ENCODE measurements at regions of chr11 and their contacts with region 1.

Region 1: DNA sequence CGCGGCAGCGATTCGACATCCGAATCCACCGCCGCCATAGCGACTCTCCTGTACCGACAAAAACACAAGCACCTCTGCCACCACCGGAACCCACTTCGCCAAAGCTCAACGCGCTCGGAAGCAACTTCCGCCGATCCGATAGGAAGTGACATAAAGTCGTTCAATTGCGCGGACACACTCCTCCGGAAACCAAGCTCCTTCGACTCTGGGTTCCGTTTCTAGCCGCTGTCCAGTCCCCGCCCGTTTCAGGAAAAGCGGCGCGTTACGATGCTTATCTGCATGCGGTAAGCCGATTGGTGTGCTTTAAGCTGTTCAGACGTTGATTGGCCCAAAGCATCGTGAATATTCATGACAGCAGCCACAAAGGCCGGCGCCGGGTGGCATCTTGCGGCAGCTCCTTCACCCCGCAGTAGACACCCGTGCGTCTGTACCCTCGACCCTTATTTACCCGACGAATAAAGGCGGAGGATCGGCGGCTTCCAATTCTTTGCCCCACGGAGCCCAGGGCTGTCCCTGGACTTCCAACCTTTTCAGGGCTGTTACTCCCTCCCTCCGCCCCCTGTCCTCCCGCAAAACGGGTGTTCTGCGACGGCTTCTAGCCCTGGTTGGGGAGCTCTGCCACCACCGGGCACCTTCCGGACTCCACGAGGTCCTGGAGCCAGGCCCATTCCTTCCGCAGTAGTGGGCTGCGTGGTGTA is at the start of gene TUT1:
- DNase-seq: peak; percentile 96
- ATAC-seq: peak; percentile 89
- H3K4me3 Mint-ChIP-seq: peak within 1 kb of the TSS; percentile 99
- H3K27ac Mint-ChIP-seq: peak within 1 kb of the TSS; percentile 91
- H3K4me1 Mint-ChIP-seq: peaks cover 19% of the 10 kb centered on the region
- H3K27me3 Mint-ChIP-seq: no peaks in the 10 kb centered on the region; the same call in 1 of the 2 replicates
- CTCF ChIP-seq: no peak
- total RNA-seq, gene TUT1: 35.3 to 40.0 TPM (median 37.3 TPM) in 3 replicates

Region 2: DNA sequence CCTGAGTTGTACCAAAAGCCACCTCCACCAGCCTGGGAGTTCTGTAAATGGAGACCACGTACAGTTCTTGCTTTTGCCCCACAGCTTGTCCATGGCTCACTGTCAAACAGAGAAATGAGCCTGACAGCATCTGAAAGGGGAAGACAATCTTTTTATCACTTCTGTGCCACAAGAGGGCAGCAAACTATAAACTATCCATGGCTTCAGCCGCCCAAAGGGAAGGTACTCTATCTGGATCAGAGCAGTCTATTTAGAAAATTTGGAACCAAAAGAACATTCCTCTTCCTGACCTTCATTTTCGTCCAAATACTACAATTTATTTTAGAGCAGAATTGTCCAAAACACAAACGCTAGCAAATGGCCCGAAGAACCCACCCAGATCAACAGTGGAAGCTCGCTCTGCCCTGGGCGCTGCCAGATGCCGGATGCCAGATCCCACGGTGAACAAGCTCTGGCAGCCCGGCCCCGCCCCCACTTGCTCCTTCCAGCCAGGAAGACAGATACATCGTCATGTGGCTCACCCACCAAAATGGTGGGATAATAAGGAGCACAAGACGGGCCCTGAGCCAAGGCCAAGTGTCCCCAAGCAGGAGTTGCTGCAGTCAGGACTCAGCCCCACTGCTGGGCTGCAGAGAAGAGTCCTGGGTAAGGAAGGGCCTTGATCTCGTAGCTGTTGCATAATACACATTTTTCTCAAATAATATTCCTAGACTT is 196.6 kb before region 1 on chr11:
- CTCF ChIA-PET with region 1: interaction called, 29 read pairs
- POLR2A ChIA-PET with region 1: interaction called, 9 read pairs
- DNase-seq: peak; percentile 78
- ATAC-seq: peak; percentile 71
- H3K4me3 Mint-ChIP-seq: peak overlapping the region; percentile 59
- H3K27ac Mint-ChIP-seq: no peak overlapping the region; the same call in 1 of the 2 replicates
- H3K4me1 Mint-ChIP-seq: peaks cover 22% of the 10 kb centered on the region
- H3K27me3 Mint-ChIP-seq: no peaks in the 10 kb centered on the region
- CTCF ChIP-seq: peak; percentile 61

Region 3: DNA sequence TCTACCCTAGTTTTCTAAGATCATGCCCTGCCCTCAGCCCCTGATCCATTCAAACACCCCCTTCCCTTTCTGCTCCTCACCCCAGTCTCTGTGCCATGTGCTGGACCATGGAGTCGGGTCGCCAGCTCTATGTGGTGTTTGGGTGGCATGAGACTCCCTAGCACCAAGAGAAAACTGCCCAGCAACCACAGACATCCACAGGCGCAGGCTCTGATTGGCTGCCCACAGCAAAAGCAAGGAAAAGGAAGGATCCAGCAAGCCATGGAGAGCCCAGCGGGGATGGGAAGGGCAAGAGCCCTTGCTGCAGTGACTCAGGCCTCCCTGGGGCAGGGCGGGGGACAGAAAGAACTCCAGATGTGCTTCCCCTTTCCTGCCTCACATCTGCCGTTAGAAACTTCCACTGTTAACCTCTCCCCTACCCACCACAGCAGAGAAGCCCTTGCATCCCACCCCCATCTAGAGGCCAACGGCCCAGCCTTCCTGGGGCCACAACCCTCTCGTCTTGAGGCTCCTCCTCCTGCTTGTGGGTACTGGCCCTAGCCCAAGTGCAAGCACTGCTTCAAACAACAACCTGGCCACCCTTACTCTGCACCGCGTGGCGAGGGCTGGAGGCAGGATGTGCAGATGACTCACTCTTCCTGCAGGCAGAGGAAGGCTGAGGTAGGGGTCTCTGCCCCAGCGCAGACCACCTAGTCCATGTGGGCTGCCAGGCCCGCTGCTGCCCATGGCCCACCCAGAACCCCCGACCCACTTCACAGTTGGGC is 35.3 kb before region 1 on chr11:
- CTCF ChIA-PET with region 1: interaction called, 20 read pairs
- POLR2A ChIA-PET with region 1: interaction called, 9 read pairs
- DNase-seq: peak; percentile 82
- ATAC-seq: peak; percentile 33
- H3K4me3 Mint-ChIP-seq: no peak overlapping the region; the same call in 1 of the 2 replicates
- H3K27ac Mint-ChIP-seq: peak overlapping the region; percentile 97
- H3K4me1 Mint-ChIP-seq: peaks cover 85% of the 10 kb centered on the region
- H3K27me3 Mint-ChIP-seq: no peaks in the 10 kb centered on the region; the same call in 1 of the 2 replicates
- CTCF ChIP-seq: no peak

Region 4: DNA sequence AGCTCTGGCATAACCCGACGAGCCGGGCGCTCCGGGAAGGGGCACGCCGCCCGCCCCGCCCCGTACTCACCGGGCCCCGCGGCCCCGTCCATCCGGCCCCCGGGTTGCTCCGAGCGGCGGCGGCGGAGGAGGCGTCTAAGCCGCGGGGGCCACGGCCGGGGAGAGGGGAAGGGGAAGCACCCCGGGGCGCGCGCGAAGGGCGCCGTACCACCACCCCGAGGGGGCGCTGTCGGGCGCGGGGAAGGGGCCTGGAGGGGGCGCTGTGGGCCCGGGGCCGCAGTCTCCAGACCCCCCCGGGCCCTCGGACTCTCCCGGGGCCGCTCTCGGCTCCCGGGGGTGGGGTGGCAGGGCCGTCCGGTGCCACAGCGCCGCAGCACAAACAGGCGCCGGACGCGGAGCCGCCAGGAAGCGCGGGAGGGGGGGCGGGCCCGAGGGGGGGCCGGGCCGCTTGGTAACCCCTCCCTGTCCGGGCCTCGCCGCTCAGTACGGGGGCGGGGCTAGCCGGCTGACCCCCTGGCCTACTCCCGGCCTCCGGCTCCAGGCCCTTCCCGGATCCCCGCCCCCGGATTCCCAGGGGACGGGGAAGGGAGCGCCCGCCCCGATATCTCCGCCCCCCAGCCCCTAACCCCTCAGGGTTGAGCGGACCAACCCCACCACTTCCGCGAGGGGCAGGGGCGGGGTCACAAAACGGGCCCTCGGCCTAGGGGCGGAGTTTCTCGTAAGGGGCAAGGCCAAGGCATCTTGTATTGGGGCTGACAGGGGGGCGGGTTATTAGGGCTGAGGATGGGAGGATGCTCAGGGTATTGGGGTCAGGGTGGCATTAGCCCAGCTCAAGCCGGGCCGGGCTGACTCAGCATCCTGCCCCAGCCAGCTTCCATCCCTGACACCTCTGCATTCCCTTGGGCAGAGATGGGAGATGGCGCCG is 21.0 kb after region 1 on chr11 and contains the starts of genes EML3 and ROM1:
- CTCF ChIA-PET with region 1: interaction called, 74 read pairs
- POLR2A ChIA-PET with region 1: interaction called, 21 read pairs
- DNase-seq: peak; percentile 97
- ATAC-seq: peak; percentile 89
- H3K4me3 Mint-ChIP-seq: peak within 1 kb of the TSS; percentile 95
- H3K27ac Mint-ChIP-seq: peak within 1 kb of the TSS; percentile 41; the same call in 1 of the 2 replicates
- H3K4me1 Mint-ChIP-seq: peaks cover 28% of the 10 kb centered on the region
- H3K27me3 Mint-ChIP-seq: peaks cover 9% of the 10 kb centered on the region; the same call in 1 of the 2 replicates
- CTCF ChIP-seq: peak; percentile 93
- total RNA-seq, gene EML3: 45.5 to 54.7 TPM (median 51.1 TPM) in 3 replicates
- total RNA-seq, gene ROM1: 0.78 to 1.6 TPM (median 0.94 TPM) in 3 replicates

Region 5: DNA sequence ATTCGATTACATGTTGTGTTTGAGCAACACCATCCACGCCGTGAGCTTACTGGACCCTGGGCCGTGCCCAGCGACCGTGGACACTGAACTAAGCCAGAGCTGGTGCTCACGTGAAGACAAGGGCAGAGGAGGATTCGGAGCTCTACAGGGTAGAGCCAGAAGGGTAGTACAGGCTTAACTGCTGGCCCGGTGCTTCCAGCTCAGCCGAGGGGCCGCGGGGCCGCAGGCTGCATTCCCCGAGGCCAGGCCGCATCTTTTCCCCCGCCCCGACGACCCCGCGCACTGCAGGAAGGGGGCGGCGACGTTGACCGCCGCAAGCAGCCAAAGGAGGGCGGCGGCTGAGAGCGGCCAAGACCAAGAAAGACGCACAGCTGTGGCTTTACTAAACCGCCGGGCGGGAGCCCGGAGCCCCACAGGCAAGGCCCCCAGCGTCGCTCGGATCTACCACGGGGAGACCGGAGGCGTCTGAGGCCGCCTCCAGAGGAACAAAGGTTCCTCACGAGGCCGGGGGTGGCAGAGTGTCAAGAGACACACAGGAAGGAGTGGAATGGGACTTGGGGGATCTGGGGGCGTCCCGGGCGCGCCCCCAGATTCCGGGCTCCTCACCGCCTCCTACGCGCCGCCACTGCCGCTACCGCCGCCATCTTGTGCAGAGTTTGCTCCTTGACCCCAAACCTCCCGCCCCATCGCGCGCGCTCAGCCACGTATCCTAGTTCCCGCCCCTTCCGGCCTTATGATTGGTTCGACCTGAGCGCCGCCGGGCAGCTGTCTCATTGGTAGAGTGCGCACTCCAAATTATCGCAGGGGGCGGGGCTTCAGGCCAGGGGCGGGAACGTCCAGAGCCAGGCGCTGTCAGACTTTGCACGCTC is 54.6 kb after region 1 on chr11 and contains the start of gene GANAB:
- CTCF ChIA-PET with region 1: interaction called, 7 read pairs
- POLR2A ChIA-PET with region 1: interaction called, 14 read pairs
- DNase-seq: peak; percentile 99
- ATAC-seq: peak; percentile 98
- H3K4me3 Mint-ChIP-seq: peak within 1 kb of the TSS; percentile 99
- H3K27ac Mint-ChIP-seq: peak within 1 kb of the TSS; percentile 96
- H3K4me1 Mint-ChIP-seq: peaks cover 10% of the 10 kb centered on the region
- H3K27me3 Mint-ChIP-seq: no peaks in the 10 kb centered on the region
- CTCF ChIP-seq: no peak
- total RNA-seq, gene GANAB: 323 to 350 TPM (median 327 TPM) in 3 replicates

Region 6: DNA sequence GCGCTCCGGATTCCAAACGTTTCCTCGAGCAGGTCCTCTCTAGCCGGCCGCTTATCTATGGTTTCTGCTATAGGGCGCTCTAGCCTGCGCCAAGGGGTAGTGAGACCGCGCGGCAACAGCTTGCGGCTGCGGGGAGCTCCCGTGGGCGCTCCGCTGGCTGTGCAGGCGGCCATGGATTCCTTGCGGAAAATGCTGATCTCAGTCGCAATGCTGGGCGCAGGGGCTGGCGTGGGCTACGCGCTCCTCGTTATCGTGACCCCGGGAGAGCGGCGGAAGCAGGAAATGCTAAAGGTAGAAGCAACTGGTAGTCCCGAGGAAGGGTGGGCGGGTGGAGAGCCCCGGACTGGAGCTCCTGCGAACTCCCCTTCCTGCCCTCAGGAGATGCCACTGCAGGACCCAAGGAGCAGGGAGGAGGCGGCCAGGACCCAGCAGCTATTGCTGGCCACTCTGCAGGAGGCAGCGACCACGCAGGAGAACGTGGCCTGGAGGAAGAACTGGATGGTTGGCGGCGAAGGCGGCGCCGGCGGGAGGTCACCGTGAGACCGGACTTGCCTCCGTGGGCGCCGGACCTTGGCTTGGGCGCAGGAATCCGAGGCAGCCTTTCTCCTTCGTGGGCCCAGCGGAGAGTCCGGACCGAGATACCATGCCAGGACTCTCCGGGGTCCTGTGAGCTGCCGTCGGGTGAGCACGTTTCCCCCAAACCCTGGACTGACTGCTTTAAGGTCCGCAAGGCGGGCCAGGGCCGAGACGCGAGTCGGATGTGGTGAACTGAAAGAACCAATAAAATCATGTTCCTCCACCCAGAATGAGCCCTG is 80.2 kb after region 1 on chr11 and contains the starts of genes LBHD1 and UQCC3:
- CTCF ChIA-PET with region 1: interaction called, 3 read pairs
- POLR2A ChIA-PET with region 1: interaction called, 42 read pairs
- DNase-seq: peak; percentile 87
- ATAC-seq: peak; percentile 69
- H3K4me3 Mint-ChIP-seq: peak within 1 kb of the TSS; percentile 98
- H3K27ac Mint-ChIP-seq: peak within 1 kb of the TSS; percentile 98
- H3K4me1 Mint-ChIP-seq: peaks cover 24% of the 10 kb centered on the region
- H3K27me3 Mint-ChIP-seq: no peaks in the 10 kb centered on the region
- CTCF ChIP-seq: no peak
- total RNA-seq, gene LBHD1: 4.2 to 6.3 TPM (median 5.1 TPM) in 3 replicates
- total RNA-seq, gene UQCC3: 17.7 to 18.7 TPM (median 18.1 TPM) in 3 replicates

Region 7: GRCh38 chr11:62705880-62706849 is 114.6 kb after region 1 on chr11:
- CTCF ChIA-PET with region 1: interaction called, 12 read pairs
- POLR2A ChIA-PET with region 1: interaction called, 21 read pairs
- DNase-seq: peak; percentile 96
- ATAC-seq: peak; percentile 61
- H3K4me3 Mint-ChIP-seq: peak overlapping the region; percentile 92
- H3K27ac Mint-ChIP-seq: peak overlapping the region; percentile 98
- H3K4me1 Mint-ChIP-seq: peaks cover 38% of the 10 kb centered on the region
- H3K27me3 Mint-ChIP-seq: no peaks in the 10 kb centered on the region; the same call in 1 of the 2 replicates
- CTCF ChIP-seq: no peak

Region 8: GRCh38 chr11:62747475-62748160 is 156.0 kb after region 1 on chr11:
- CTCF ChIA-PET with region 1: no interaction called
- POLR2A ChIA-PET with region 1: no interaction called
- DNase-seq: no peak
- ATAC-seq: no peak
- H3K4me3 Mint-ChIP-seq: no peak overlapping the region
- H3K27ac Mint-ChIP-seq: peak overlapping the region; percentile 80
- H3K4me1 Mint-ChIP-seq: peaks cover 6% of the 10 kb centered on the region
- H3K27me3 Mint-ChIP-seq: no peaks in the 10 kb centered on the region
- CTCF ChIP-seq: no peak